ENCODE measurements at regions of chr4 and their contacts with region 1.

Region 1: GRCh38 chr4:140308366-140309123 is 64.9 kb upstream of the SCOC start:
- DNase-seq: peak; percentile 80 to 89
- ATAC-seq: peak; percentile 97 to 98
- H3K4me3 ChIP-seq: peak overlapping the region in 3 of 4 donors; percentile 15 to 38 (median 29)
- H3K27ac ChIP-seq: peak overlapping the region; percentile 82 to 88 (median 87)
- H3K4me1 ChIP-seq: peaks cover 22 to 25% of the 10 kb centered on the region in 2 donors
- H3K27me3 ChIP-seq: no peaks in the 10 kb centered on the region
- CTCF ChIP-seq: no peak
- POLR2A ChIP-seq: no peak

Region 2: DNA sequence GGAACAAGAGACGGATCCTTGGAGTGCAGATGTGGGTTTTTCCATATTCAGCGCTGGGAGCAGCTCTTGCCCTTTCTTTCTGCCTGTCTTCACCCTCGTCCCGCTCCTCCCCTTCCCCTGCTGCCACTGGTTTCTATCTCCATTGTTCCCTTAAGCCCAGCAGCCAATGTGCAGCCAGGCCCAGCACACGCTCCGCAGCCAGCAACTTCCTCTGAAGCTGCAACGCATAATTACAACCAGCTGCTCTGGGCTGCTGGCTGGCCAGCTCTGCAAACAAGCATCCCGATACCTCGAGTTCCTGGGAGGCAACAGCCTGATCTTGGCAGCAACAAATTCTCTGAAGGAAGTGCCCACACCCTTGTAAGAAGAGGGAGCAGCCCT is 70.9 kb before region 1 on chr4:
- in situ Hi-C with region 1: no loop called
- intact Hi-C with region 1: loop called (anchors 1 kb)
- DNase-seq: peak; percentile 53 to 70
- ATAC-seq: peak; percentile 42 to 49
- H3K4me3 ChIP-seq: peak overlapping the region; percentile 25 to 45 (median 39)
- H3K27ac ChIP-seq: peak overlapping the region; percentile 84 to 90 (median 88)
- H3K4me1 ChIP-seq: peaks cover 38 to 48% of the 10 kb centered on the region in 2 donors
- H3K27me3 ChIP-seq: no peaks in the 10 kb centered on the region
- CTCF ChIP-seq: no peak
- POLR2A ChIP-seq: no peak